ENCODE measurements at regions of chr11 and their contacts with region 1.

Region 1: GRCh38 chr11:118659314-118659952 is 20.0 kb downstream of the TREH start:
- DNase-seq: no peak
- H3K4me3 ChIP-seq: no peak overlapping the region
- CTCF ChIP-seq: peak; percentile 98

Region 2: DNA sequence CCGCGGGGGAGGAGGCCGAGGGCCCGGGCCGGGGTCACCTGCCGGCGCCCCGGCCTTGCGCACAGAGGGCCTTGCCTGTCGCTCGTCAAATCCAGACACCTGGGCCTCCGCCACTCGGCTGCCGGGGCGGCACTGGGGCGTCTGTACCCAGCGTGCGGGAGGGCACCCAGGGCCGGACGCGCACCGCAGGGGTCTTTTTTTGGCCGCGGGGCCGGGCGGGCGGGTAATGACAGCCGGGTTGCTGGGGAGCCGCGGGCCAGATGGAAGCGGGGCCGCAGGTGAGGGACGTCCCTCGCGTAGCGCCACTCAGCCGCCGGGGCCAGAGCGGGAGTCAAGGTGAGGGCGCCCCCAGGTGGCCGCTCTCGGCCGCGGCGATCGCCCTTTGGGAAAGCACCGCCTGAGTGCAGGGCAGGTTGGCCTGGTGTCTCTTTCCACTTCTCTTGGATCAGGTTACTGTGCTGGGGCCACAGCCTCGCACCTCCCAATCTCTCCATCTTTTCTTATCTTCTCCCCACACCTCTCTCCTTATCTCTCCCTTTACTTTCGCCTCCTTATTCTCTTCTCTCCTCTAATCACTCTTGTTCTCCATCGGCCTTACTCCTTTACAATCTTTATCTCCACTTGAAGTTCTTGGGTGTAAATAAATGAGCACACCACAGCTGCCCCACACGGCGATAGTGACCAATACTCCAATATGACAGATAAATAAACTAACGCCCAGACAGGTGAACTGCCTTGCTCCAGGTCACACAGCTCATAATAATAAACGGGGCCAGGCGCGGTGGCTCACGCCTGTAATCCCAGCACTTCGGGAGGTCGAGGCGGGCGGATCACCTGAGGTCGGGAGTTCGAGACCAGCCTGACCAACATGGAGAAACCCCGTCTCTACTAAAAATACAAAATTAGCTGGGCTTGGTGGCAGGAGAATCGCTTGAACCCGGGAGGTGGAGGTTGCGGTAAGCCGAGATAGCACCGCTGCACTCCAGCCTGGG is 48.3 kb before region 1 on chr11:
- CTCF ChIA-PET with region 1: interaction called, 43 read pairs
- POLR2A ChIA-PET with region 1: interaction called, 5 read pairs
- DNase-seq: no peak
- H3K4me3 ChIP-seq: peak overlapping the region; percentile 80
- CTCF ChIP-seq: peak; percentile 92

Region 3: DNA sequence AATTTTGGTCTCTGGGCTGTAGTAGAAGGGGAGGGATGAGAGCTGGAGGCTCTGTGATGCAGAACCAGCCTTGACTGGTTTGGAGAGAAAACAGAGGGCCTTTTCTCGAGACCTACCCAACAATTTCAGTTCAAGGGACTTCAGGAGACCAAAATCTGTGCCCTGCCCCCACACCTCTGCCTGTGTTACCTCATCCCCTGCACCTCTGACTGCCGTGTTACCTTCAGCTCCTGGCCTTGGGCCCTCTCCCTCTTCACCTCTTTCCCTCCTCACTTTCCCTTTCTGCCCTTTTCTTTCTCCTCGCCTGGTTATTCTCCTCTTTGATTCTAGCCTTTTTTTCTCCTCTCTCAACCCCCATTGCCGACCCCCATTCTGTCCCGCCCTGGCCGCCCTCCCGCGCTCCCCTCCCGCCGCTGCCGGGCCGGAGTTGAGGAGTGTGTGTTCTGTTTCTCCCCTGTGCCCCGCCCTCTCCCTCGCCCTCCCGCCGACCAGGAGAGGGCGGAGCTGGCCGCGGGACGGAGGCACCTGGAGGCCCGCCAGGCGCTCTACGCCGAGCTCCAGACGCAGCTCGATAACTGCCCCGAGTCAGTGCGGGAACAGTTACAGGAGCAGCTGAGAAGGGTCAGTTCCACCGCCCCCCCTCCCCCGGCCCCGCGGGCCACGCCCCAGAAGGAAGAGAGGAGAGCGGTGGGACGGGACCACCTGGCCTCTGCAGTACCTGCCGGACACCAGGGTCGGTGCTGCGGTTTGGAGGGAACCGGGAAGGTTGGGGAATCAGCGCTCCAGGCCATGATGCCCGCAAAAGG is 24.8 kb before region 1 on chr11:
- CTCF ChIA-PET with region 1: interaction called, 28 read pairs
- POLR2A ChIA-PET with region 1: interaction called, 3 read pairs
- DNase-seq: no peak
- H3K4me3 ChIP-seq: no peak overlapping the region
- CTCF ChIP-seq: no peak

Region 4: DNA sequence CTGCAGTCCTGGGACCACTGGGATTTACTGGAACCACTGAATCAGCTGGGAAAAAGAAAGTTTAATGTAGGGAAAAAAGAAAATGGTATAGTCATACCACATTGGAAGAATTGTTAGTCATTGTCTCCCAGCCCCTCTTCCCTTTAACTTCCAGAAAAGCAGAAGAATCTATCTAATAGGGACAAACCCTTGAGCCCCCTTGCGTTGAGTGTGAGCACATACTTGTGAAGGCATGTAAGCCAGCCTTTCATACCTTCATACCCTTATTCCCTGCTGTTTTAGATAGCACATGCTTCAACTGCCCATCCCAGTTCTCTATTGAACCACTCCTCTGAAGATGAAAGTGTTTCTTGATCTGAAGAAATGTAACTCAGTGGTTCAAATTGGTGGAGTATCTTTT is 13.4 kb after region 1 on chr11:
- CTCF ChIA-PET with region 1: interaction called, 22 read pairs
- POLR2A ChIA-PET with region 1: no interaction called
- DNase-seq: no peak
- H3K4me3 ChIP-seq: no peak overlapping the region
- CTCF ChIP-seq: no peak

Measured in AG04449 (cell line).